ENCODE measurements at regions of chr12 and their contacts with region 1.

Region 1: DNA sequence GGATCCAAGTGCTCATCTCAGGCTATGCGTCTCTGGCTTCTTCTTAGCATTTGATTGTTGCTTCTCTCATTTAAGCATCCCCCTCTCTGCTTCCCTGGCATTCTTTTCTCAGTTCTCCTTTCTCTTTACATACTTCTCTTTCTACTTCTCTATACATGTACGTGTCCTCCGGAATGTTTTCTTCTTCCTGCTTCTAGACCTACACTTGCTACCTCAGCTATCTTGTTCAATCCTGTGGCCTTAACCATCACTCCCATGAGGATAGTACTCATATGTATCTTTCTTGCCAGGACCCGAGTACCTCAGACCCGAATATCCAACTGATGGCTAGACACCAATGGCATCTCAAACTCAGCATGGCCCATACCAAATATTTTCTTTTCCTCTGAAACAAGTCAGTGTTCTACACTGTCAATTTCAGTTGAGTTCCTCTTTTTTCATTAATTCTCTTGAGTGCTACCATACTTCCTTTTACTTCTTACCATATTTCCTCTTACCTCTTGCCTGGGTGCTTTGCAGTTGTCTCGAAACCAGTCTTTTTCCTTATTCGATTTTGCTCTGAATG is 115.1 kb upstream of the SLC38A2 start:
- H3K4me3 Mint-ChIP-seq: no peak overlapping the region
- H3K27ac Mint-ChIP-seq: no peak overlapping the region
- H3K4me1 Mint-ChIP-seq: peaks cover 5% of the 10 kb centered on the region
- H3K27me3 Mint-ChIP-seq: no peaks in the 10 kb centered on the region

Region 2: GRCh38 chr12:46318037-46318436 is 169.6 kb before region 1 on chr12:
- intact Hi-C with region 1: no loop called
- H3K4me3 Mint-ChIP-seq: no peak overlapping the region
- H3K27ac Mint-ChIP-seq: no peak overlapping the region
- H3K4me1 Mint-ChIP-seq: no peaks in the 10 kb centered on the region
- H3K27me3 Mint-ChIP-seq: no peaks in the 10 kb centered on the region

Region 3: DNA sequence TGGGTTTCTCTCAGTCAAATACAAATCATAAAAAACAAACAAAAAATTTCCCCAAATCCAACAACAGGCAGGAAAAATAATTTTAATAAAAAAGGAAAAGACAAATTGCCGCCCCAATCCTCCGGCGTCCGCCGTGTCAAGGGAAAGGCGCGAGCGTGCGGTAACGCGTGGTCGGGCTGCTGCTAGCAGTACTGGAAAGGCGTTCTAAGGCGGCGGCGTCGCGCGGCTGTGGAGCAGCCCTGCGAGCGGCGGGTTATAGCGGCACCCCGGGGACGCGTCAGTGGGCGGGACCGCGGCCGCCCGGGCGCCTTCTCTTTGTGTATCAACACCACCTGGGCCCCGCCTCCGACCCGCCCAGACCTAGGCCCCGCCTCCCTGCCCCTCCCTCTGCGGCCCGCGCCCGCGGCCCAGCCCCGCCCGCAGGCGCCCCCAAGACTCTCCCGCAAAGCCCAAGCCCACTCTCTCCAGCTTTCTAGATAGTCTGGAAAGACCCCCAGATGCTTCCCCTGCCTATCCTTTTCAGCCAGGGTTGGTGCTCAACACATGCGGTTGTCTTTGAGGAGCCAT is 115.0 kb before region 1 on chr12 and contains the start of gene SLC38A2:
- intact Hi-C with region 1: loop called (anchors 5 kb)
- H3K4me3 Mint-ChIP-seq: peak within 1 kb of the TSS; percentile 93
- H3K27ac Mint-ChIP-seq: peak within 1 kb of the TSS; percentile 99
- H3K4me1 Mint-ChIP-seq: peaks cover 38% of the 10 kb centered on the region
- H3K27me3 Mint-ChIP-seq: peaks cover 6% of the 10 kb centered on the region

Region 4: DNA sequence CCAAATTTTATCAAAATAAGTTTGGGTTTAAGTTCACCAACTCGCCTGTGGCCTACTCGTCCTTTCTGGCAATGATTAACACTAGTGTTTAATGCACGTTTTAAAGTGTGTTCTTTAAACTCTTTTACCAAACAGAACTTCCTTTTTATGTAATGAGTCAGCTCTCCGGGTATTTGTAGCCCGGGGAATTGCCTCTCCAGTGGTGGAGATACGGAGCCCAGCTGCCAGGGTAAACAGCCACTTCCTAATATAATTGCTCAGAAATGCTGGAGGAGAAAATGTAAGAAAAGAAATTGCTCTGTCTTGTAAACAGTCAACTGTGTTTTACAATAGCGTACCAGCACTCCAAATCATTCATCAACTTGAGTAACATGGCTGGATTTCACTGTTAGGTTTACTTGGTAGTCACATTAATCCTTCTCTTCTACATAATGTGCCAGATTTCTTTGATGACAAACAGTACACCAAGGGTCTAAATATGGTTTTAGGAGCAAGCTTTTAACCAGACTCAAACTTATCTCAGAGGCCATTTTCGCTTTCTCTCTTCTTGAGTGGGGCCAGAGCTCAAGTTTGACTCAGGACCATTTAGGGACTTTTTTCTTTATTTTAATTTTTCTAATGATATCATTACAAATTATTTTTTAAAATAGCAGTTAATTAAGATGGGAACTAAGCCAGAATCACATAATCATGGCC is 13.9 kb before region 1 on chr12:
- intact Hi-C with region 1: loop called (anchors 2 kb)
- H3K4me3 Mint-ChIP-seq: peak overlapping the region; percentile 32
- H3K27ac Mint-ChIP-seq: peak overlapping the region; percentile 86
- H3K4me1 Mint-ChIP-seq: peaks cover 35% of the 10 kb centered on the region
- H3K27me3 Mint-ChIP-seq: no peaks in the 10 kb centered on the region

Region 5: GRCh38 chr12:46546634-46547286 is 59.1 kb after region 1 on chr12:
- intact Hi-C with region 1: no loop called
- H3K4me3 Mint-ChIP-seq: no peak overlapping the region
- H3K27ac Mint-ChIP-seq: no peak overlapping the region
- H3K4me1 Mint-ChIP-seq: peaks cover 34% of the 10 kb centered on the region
- H3K27me3 Mint-ChIP-seq: no peaks in the 10 kb centered on the region